ENCODE measurements at regions of chr12 and their contacts with region 1.

Region 1: DNA sequence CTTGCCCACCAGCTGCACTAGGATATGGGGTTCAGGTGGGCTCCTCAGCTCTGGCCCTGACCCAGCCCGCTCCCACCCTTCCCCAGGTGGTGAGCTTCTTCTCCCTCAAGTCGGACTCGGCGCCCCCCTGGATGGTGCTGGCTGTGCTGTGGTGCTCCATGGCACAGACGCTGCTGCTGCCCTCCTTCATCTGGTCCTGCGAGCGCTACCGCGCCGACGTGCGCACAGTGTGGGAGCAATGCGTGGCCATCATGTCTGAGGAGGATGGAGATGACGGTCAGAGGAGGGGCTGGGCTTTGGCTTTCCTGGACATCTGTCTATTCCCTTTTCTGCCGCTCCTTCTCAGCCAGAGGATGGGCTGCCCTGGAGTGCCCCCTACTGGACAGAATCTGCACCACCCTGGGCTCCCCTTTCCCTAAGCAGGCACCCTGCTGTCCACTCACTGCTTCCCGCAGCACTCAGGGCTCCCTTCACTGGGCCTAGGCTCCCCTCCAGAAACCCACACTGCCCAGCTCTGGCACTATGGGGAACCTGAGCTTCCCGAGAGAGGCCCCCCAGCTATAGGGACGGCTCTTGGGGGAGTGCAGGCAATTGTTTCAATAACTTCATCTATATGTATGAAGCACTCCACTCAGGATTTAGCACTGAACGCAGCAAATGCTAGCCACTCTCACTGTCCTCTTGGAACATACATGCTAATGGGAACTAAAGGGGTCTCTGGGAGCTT is 2.6 kb upstream of the P3H3 start:
- H3K4me3 Mint-ChIP-seq: no peak overlapping the region
- H3K27ac Mint-ChIP-seq: no peak overlapping the region
- H3K4me1 Mint-ChIP-seq: peaks cover 65% of the 10 kb centered on the region
- H3K27me3 Mint-ChIP-seq: peaks cover 54% of the 10 kb centered on the region

Region 2: DNA sequence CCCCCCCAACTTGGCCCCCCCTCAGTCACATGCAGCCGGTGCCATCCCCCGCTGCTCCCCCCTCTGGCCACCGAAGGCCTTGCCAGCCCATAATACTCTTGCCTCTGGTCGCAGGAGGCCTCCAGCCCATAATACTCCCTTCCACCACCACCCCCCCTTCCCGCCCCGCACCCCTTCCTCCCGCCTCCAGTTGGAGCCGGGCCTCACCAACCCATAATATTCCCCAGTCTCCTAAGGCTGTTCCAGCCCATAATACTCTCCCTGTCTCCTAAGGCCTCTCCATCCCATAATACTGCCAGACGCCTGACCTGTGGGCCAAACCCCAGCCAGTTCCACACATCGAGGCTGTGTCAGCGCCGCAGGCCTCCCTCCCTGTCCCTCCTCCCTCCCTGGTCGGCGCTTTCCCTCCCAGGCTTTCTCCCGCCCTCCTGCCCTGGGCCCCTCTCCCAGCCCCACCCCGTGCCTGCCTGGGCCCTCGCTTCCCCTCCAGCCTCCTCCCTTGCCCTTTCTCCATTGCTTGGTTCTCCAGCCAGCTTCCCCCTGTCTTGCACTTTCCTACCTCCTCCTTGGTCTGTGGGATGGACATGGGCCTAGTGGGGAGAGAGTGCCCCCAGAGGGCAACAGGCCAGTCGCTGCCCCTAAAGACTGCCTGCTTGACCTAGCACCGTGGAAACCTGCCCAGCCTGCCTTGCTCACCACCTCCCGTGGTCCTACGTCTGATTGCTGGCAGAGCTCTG is 211.6 kb before region 1 on chr12:
- intact Hi-C with region 1: loop called (anchors 5 kb)
- H3K4me3 Mint-ChIP-seq: peak overlapping the region; percentile 62
- H3K27ac Mint-ChIP-seq: peak overlapping the region; percentile 85
- H3K4me1 Mint-ChIP-seq: peaks cover 66% of the 10 kb centered on the region
- H3K27me3 Mint-ChIP-seq: no peaks in the 10 kb centered on the region

Region 3: DNA sequence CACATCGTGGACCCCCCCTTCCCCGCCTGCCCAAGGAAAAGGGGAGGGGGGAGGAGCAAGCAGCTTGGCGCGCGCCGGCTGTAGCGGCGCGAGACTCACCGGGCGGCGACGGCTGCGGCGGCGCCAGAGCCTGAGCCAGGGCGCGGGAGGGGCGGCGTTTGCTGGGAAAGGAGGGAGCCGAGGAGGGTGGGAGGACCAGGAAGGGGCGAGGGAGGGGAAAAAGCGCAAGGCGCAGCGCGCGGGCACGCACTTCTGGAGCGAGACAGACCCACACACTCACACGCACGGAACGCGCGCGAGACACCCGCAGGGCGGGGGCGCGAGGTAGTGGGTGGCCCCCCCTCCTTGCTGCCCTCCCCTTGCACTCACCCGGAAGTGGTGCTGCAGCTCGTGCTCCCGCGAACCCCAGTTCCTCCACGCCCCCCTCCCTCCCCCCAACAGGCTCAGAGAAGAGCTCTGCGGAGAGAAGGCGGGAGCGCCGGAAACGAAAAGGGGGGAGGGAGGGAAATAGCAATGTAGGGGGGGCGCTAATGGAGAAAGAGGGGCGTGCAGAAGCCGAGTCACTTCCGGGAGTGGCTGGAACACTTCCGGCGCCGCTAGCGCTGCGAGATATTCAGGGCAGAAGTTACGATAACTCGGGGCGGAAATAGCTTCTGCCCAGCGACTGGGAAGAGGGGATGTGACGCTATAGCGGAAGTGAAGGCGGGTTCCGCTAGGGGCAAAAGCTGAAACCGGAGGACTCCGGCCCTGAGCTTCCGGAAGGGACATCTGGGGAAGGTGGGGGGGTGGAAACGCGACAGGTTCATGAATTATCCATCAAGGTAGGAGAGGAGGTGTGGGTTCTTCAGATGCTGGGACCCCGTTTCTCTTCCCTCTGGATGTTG is 136.3 kb before region 1 on chr12 and contains the start of gene ZNF384:
- intact Hi-C with region 1: loop called (anchors 5 kb)
- H3K4me3 Mint-ChIP-seq: peak within 1 kb of the TSS; percentile 97
- H3K27ac Mint-ChIP-seq: peak within 1 kb of the TSS; percentile 97
- H3K4me1 Mint-ChIP-seq: peaks cover 50% of the 10 kb centered on the region
- H3K27me3 Mint-ChIP-seq: peaks cover 10% of the 10 kb centered on the region

Region 4: DNA sequence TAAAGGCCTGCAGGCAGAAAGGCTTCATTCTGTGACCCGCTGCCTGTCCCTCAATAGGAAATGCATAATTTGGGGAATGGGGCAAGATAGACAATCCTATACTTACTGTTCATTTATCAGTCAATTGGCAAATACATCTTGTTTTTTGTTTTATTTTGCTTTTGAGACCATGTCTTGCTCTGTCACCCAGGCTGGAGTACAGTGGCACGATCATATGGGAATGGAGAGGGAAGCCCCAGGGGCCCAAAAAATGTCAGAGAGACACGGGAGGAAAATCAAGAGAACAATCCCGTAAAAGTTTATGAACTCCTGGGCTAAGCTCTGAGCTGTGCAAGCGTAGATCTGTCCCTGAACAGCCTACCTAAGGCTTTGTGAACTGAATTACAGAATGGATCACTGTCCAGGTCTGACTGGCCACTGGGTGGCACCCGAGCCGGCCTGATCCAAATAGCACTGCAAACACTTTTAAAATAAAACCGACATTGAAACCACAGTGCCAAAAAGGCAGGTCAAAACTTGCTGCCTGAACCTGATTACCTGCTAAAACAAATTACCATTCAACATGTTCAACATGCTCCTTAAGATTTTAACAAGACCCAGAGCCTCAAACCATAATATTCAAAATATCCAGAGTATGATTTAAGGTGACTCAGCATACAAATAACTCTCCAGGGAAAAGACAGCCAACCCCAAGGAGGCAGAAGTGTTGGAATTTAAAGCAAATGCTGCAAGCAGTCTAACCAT is 89.9 kb before region 1 on chr12:
- intact Hi-C with region 1: loop called (anchors 5 kb)
- H3K4me3 Mint-ChIP-seq: no peak overlapping the region
- H3K27ac Mint-ChIP-seq: peak overlapping the region; percentile 41
- H3K4me1 Mint-ChIP-seq: peaks cover 5% of the 10 kb centered on the region
- H3K27me3 Mint-ChIP-seq: no peaks in the 10 kb centered on the region

Region 5: GRCh38 chr12:6752921-6753771 is 72.4 kb before region 1 on chr12 and contains the start of gene MLF2:
- intact Hi-C with region 1: loop called (anchors 1 kb)
- H3K4me3 Mint-ChIP-seq: peak within 1 kb of the TSS; percentile 99
- H3K27ac Mint-ChIP-seq: peak within 1 kb of the TSS; percentile 100
- H3K4me1 Mint-ChIP-seq: peaks cover 54% of the 10 kb centered on the region
- H3K27me3 Mint-ChIP-seq: peaks cover 7% of the 10 kb centered on the region

Region 6: GRCh38 chr12:6792522-6793201 is 32.9 kb before region 1 on chr12:
- intact Hi-C with region 1: loop called (anchors 5 kb)
- H3K4me3 Mint-ChIP-seq: peak overlapping the region; percentile 88
- H3K27ac Mint-ChIP-seq: peak overlapping the region; percentile 93
- H3K4me1 Mint-ChIP-seq: peaks cover 67% of the 10 kb centered on the region
- H3K27me3 Mint-ChIP-seq: no peaks in the 10 kb centered on the region

Region 7: GRCh38 chr12:6873094-6874014 is 47.8 kb after region 1 on chr12 and contains the start of gene SPSB2:
- intact Hi-C with region 1: no loop called
- H3K4me3 Mint-ChIP-seq: peak within 1 kb of the TSS; percentile 97
- H3K27ac Mint-ChIP-seq: peak within 1 kb of the TSS; percentile 87
- H3K4me1 Mint-ChIP-seq: peaks cover 51% of the 10 kb centered on the region
- H3K27me3 Mint-ChIP-seq: no peaks in the 10 kb centered on the region